Activated CD4-positive, alpha-beta T cell treated with anti-CD3 and anti-CD28 coated beads, Interleukin-2, amount 10 ng/mL, durations not matched to agents 24 days and 14 days (primary cell): ENCODE measurements at regions of chr1 and their contacts with region 1.

Region 1: GRCh38 chr1:155591770-155592169 is 18.2 kb upstream of the MSTO1 start:
- DNase-seq: peak; percentile 83
- H3K4me3 Mint-ChIP-seq: no peak overlapping the region
- H3K27ac Mint-ChIP-seq: no peak overlapping the region
- H3K4me1 Mint-ChIP-seq: no peaks in the 10 kb centered on the region
- H3K27me3 Mint-ChIP-seq: no peaks in the 10 kb centered on the region

Region 2: GRCh38 chr1:155250633-155251449 is 340.9 kb before region 1 on chr1:
- intact Hi-C with region 1: loop called (anchors 2 kb)
- DNase-seq: peak; percentile 99
- H3K4me3 Mint-ChIP-seq: peak overlapping the region; percentile 58
- H3K27ac Mint-ChIP-seq: no peak overlapping the region
- H3K4me1 Mint-ChIP-seq: peaks cover 32% of the 10 kb centered on the region
- H3K27me3 Mint-ChIP-seq: no peaks in the 10 kb centered on the region

Region 3: GRCh38 chr1:155553349-155553748 is 38.4 kb before region 1 on chr1:
- intact Hi-C with region 1: no loop called
- DNase-seq: no peak
- H3K4me3 Mint-ChIP-seq: no peak overlapping the region
- H3K27ac Mint-ChIP-seq: no peak overlapping the region
- H3K4me1 Mint-ChIP-seq: peaks cover 23% of the 10 kb centered on the region
- H3K27me3 Mint-ChIP-seq: no peaks in the 10 kb centered on the region